ENCODE measurements at regions of chr5 and their contacts with region 1.

Region 1: DNA sequence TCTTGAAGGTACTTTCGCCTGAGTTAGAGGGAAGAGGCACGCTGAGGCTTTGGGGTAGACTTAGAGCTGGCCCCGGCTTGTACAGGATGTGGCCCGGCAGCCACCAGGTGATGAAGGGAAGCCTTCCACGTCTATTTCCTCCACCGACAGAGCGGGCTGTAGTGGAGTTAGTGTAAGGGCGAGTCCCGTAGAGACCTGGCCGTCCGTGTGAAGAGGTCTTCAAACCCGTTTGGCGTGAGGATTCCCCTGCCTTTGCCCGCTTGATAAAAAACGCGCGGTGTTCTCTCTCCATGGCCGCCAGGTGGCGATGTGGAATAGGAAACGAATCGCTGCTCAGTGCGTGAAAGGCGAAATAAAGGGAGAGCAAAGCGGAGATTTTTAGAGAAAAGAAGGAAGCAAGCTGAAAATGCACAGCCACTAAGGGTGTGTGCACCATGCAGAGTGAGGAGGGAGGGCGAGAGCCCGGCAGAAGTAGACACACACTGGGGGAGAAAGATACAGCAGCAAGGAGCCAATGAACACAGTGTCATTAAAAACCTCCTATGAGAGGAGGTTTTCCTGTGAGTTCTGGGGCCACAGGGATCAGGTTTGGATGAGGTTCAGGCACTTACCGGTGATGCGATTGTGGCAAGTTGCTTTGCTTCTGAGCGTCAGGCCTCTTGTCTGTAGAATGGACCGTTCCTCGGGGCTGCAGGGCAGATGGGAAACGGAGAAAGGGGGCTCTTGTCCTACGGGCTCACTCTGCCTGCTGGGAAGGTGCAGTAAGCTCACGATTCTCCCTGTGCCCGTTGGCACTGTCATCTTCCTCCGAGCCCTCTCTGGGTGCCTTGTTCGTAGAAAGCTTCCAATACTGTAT is 34.2 kb downstream of the STC2 start:
- DNase-seq: peak; percentile 68 to 87 (median 80)
- H3K4me3 ChIP-seq: no peak overlapping the region
- H3K27ac ChIP-seq: no peak overlapping the region
- H3K4me1 ChIP-seq: peaks cover 2% of the 10 kb centered on the region
- H3K27me3 ChIP-seq: no peaks in the 10 kb centered on the region
- CTCF ChIP-seq: peak; percentile 67 to 89 (median 82)
- EP300 ChIP-seq: no peak
- POLR2A ChIP-seq: no peak

Region 2: GRCh38 chr5:173331956-173332479 is 38.0 kb after region 1 on chr5:
- intact Hi-C with region 1: loop called in 3 of 4 experiments (anchors 1 to 5 kb)
- DNase-seq: peak; percentile 76 to 90 (median 84)
- H3K4me3 ChIP-seq: no peak overlapping the region
- H3K27ac ChIP-seq: no peak overlapping the region
- H3K4me1 ChIP-seq: no peaks in the 10 kb centered on the region
- H3K27me3 ChIP-seq: no peaks in the 10 kb centered on the region
- CTCF ChIP-seq: peak; percentile 76 to 92 (median 86)
- EP300 ChIP-seq: no peak
- POLR2A ChIP-seq: no peak

Region 3: GRCh38 chr5:173573126-173573960 is 279.3 kb after region 1 on chr5:
- intact Hi-C with region 1: loop called (anchors 1 to 5 kb)
- DNase-seq: peak; percentile 60 to 89 (median 71)
- H3K4me3 ChIP-seq: no peak overlapping the region
- H3K27ac ChIP-seq: no peak overlapping the region
- H3K4me1 ChIP-seq: no peaks in the 10 kb centered on the region
- H3K27me3 ChIP-seq: no peaks in the 10 kb centered on the region
- CTCF ChIP-seq: peak; percentile 71 to 90 (median 88)
- EP300 ChIP-seq: no peak
- POLR2A ChIP-seq: no peak

Region 4: GRCh38 chr5:173972925-173973615 is 679.0 kb after region 1 on chr5:
- intact Hi-C with region 1: loop called in 1 of 4 experiments (anchors 10 kb)
- DNase-seq: peak; percentile 80 to 89 (median 87)
- H3K4me3 ChIP-seq: peak overlapping the region; percentile 41
- H3K27ac ChIP-seq: no peak overlapping the region
- H3K4me1 ChIP-seq: peaks cover 4% of the 10 kb centered on the region
- H3K27me3 ChIP-seq: no peaks in the 10 kb centered on the region
- CTCF ChIP-seq: peak; percentile 71 to 89 (median 88)
- EP300 ChIP-seq: no peak
- POLR2A ChIP-seq: no peak

Region 5: DNA sequence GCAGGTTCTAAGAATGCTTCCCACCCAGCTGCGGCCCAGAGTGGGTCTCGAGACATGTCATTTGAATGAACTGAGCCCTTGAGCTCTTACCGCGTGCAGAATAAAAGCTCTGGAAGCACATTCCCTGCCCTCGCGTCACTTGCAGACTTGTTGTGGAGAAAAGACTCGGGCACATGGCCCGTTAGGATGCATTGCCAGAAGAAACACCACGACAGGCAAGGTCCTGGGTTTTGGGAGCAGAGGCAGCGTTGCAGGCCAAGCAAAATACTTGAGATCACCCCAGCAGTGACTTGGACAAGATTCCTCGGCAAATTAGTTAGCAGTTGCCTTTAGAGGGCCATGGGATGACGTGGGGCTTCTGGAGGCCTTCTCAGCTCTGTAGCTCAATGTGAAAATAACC is 1259.5 kb after region 1 on chr5:
- intact Hi-C with region 1: no loop called
- DNase-seq: no peak
- H3K4me3 ChIP-seq: no peak overlapping the region
- H3K27ac ChIP-seq: no peak overlapping the region
- H3K4me1 ChIP-seq: no peaks in the 10 kb centered on the region
- H3K27me3 ChIP-seq: no peaks in the 10 kb centered on the region
- CTCF ChIP-seq: no peak
- EP300 ChIP-seq: no peak
- POLR2A ChIP-seq: no peak

Measured in ovary (tissue), 10 donors.